ENCODE measurements at regions of chr6 and their contacts with region 1.

Region 1: GRCh38 chr6:107033126-107033525 is 5.1 kb downstream of the MTRES1 start:
- DNase-seq: no peak
- H3K4me3 ChIP-seq: no peak overlapping the region
- H3K27ac ChIP-seq: no peak overlapping the region
- H3K4me1 ChIP-seq: peaks cover 14 to 38% (median 22%) of the 10 kb centered on the region in 4 donors
- H3K27me3 ChIP-seq: no peaks in the 10 kb centered on the region
- CTCF ChIP-seq: no peak
- EP300 ChIP-seq: no peak
- POLR2A ChIP-seq: no peak

Region 2: GRCh38 chr6:106685833-106686232 is 347.3 kb before region 1 on chr6:
- intact Hi-C with region 1: no loop called
- DNase-seq: no peak
- H3K4me3 ChIP-seq: no peak overlapping the region
- H3K27ac ChIP-seq: no peak overlapping the region
- H3K4me1 ChIP-seq: no peaks in the 10 kb centered on the region
- H3K27me3 ChIP-seq: no peaks in the 10 kb centered on the region
- CTCF ChIP-seq: no peak
- EP300 ChIP-seq: no peak
- POLR2A ChIP-seq: no peak

Region 3: DNA sequence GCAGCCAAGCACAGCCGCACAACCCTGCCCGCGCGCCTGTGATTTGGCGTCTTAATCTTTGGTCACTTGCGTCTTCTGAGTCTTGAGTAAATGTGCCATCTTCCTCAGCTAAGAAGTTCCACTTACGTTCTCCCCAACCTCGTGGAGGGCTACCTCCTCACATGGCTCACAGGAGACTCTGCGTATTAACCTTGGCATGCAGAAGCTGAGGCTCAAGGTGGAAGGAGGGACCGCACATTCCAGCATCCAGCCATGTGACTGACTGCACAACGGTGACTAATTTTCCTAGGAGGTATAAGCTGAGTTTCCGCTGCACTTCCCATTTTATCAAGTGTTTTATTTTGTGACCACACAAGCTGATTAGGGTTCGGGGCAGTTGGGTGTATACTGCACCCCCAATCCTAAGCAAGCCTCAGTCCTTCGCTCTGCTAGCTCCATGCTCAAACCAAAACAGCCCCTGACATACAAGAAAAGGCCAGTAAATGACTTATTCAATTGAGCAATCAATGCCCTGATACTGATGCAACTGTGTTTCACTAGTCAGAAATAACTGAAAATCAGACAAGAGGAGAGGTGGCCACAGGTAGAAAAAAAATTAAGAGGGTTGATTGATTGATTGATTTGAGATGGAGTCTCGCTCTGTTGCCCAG is 75.2 kb after region 1 on chr6:
- intact Hi-C with region 1: loop called (anchors 10 kb)
- DNase-seq: no peak
- H3K4me3 ChIP-seq: no peak overlapping the region
- H3K27ac ChIP-seq: no peak overlapping the region
- H3K4me1 ChIP-seq: peaks cover 0 to under 1% (median under 1%) of the 10 kb centered on the region in 4 donors
- H3K27me3 ChIP-seq: no peaks in the 10 kb centered on the region
- CTCF ChIP-seq: no peak
- EP300 ChIP-seq: no peak
- POLR2A ChIP-seq: no peak

Region 4: DNA sequence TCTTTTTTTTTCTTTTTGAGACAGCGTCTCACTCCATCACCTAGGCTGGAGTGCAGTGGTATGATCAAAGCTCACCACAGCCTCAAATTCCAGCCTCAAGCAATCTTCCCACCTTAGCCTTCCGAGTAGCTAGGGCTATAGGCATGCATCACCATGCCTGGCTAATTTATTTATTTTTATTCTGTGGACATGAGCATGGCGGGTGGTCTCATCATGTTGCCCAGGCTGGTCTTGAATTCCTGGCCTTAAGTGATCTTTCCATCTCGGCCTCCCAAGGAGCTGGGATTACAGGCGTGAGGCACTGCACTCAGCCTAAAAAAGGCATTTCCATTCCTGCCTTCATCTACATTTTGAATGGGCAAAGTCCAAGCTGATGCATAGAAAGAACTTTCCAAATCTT is 138.4 kb after region 1 on chr6:
- intact Hi-C with region 1: no loop called
- DNase-seq: no peak
- H3K4me3 ChIP-seq: no peak overlapping the region
- H3K27ac ChIP-seq: no peak overlapping the region
- H3K4me1 ChIP-seq: no peaks in the 10 kb centered on the region
- H3K27me3 ChIP-seq: no peaks in the 10 kb centered on the region
- CTCF ChIP-seq: no peak
- EP300 ChIP-seq: no peak
- POLR2A ChIP-seq: no peak

Region 5: DNA sequence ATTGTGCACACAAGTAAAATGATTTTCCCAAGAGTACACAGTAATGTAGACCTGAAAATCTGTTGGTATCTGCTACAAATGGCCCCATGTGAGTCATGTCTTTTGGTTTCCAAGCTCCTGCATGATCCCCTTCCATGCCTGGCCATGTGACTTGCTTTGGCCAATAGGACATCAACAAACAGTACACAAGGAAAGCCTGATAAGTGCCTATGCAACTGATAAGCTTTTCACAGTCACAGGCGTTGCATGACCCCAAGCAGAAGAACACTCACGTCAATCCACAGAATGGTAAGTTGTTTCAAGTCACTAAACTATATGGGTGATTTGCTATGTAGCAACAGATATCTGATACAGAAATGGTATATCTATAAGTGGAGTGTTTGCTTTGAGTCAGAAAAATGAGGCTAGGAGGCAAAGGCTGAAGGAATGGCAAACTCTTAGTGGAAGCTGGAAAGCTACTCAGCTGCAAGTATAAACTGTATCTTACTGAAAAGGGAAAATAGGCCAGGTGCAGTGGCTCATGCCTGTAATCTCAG is 242.3 kb after region 1 on chr6:
- intact Hi-C with region 1: no loop called
- DNase-seq: peak; percentile 63 to 83
- H3K4me3 ChIP-seq: no peak overlapping the region
- H3K27ac ChIP-seq: peak overlapping the region in 2 of 5 donors; percentile 30 to 62
- H3K4me1 ChIP-seq: peaks cover 0 to 11% (median 8%) of the 10 kb centered on the region in 4 donors
- H3K27me3 ChIP-seq: no peaks in the 10 kb centered on the region
- CTCF ChIP-seq: no peak
- EP300 ChIP-seq: no peak
- POLR2A ChIP-seq: no peak

Measured in stomach (tissue), 19 donors.